Activated CD4-positive, alpha-beta T cell treated with anti-CD3 and anti-CD28 coated beads for 36 hours (primary cell): ENCODE measurements at regions of chr12 and their contacts with region 1.

Region 1: GRCh38 chr12:64696080-64696741 is 63.0 kb downstream of the GNS start:
- DNase-seq: no peak
- ATAC-seq: no peak
- H3K4me3 Mint-ChIP-seq: no peak overlapping the region
- H3K27ac Mint-ChIP-seq: no peak overlapping the region
- H3K4me1 Mint-ChIP-seq: peaks cover 75% of the 10 kb centered on the region
- H3K27me3 Mint-ChIP-seq: no peaks in the 10 kb centered on the region

Region 2: GRCh38 chr12:64431791-64432190 is 264.4 kb before region 1 on chr12:
- CTCF ChIA-PET with region 1: no interaction called
- POLR2A ChIA-PET with region 1: no interaction called
- intact Hi-C with region 1: no loop called
- DNase-seq: no peak
- ATAC-seq: no peak
- H3K4me3 Mint-ChIP-seq: no peak overlapping the region
- H3K27ac Mint-ChIP-seq: no peak overlapping the region
- H3K4me1 Mint-ChIP-seq: no peaks in the 10 kb centered on the region
- H3K27me3 Mint-ChIP-seq: no peaks in the 10 kb centered on the region

Region 3: DNA sequence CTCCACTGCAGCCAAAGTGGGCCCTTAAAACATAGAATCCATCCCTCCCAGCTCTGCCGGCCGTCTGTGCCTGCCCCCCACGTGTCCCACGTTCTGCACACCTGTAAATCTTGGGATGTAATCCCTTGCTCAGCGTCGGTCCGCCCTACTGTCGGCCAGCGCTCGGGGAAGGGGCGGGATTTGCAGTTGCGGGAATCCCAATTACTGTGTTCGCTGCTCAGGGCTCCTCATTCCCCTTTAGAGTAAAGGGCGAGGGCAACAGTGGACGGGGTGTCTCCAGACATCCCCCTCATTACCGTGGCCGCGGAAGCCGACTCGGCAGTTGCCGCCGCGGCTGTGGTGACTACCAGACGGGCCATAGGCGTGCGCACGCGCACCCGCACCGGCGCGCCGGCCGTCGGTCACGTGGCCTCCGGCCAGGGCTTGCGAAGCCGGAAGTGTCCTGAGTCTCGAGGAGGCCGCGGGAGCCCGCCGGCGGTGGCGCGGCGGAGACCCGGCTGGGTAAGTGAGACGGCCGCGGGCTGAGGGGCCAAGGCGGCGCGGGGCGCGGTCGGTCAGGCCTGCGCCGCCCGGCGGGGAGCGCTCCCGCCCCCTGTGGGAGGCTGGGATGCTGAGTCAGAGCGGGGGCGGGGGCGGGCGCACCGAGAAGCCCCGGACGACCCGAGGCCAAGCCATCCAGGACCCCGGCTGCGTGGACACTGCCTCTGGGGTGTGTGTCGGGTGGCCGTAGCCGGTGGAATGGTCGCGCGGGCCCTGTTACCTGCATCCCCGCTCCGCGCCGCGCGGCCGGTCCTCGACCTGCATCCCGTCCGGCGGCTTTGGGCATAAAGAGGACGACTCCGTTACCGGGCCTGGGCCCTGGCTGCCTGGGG is 244.3 kb before region 1 on chr12 and contains the start of gene TBK1:
- CTCF ChIA-PET with region 1: no interaction called
- POLR2A ChIA-PET with region 1: no interaction called
- intact Hi-C with region 1: loop called in 1 of 2 experiments (anchors 5 kb)
- DNase-seq: peak; percentile 75
- ATAC-seq: peak; percentile 64
- H3K4me3 Mint-ChIP-seq: peak within 1 kb of the TSS; percentile 89
- H3K27ac Mint-ChIP-seq: peak within 1 kb of the TSS; percentile 98
- H3K4me1 Mint-ChIP-seq: peaks cover 40% of the 10 kb centered on the region
- H3K27me3 Mint-ChIP-seq: no peaks in the 10 kb centered on the region
- total RNA-seq, gene TBK1: 14.0 to 15.4 TPM

Region 4: DNA sequence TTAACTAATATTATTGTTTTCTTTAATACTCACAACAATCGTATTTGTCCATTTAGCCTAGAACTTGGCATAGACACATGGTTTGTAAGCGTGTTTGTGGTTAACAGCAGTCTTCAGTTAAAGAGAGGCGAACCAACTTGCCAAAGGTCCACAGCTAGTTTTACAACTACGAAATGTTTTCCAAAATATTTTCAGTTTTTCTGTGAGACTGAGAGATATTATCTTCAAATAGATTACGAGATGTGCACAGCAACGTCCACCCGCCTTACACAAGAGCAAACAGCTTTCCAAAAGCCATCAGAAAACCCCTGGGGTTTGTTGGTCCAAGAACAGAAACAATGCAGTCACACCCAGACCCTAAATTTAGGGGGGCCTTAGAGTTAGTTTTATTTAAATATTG is 144.5 kb before region 1 on chr12:
- CTCF ChIA-PET with region 1: interaction called, 128 read pairs
- POLR2A ChIA-PET with region 1: no interaction called
- intact Hi-C with region 1: loop called (anchors 1 kb)
- DNase-seq: no peak
- ATAC-seq: no peak
- H3K4me3 Mint-ChIP-seq: no peak overlapping the region
- H3K27ac Mint-ChIP-seq: no peak overlapping the region
- H3K4me1 Mint-ChIP-seq: peaks cover 6% of the 10 kb centered on the region
- H3K27me3 Mint-ChIP-seq: no peaks in the 10 kb centered on the region

Region 5: DNA sequence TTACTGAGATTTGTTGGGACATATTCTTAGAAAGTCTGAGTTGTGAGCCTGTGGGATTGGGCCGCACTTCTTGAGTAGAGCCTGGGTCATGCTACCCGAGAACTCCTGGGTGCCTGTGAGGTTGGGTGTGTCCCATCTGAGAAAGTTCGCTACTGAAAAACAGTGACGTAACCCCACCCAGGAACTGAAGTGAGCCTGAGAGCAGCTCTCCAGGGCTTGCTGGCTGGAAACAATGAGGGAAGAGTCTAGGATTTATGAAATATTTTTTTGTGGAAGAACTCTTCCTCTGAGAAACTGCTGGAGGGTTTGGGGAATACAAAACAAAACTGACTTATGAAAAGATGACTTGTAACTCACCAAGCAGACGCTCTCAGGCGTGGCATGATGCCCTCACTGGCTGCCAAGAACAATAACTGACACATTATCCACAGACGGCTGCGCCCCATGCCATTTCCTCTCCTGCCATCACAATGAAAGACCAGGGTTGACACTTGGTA is 16.7 kb before region 1 on chr12:
- CTCF ChIA-PET with region 1: interaction called, 19 read pairs
- POLR2A ChIA-PET with region 1: interaction called, 3 read pairs
- intact Hi-C with region 1: loop called in 1 of 2 experiments (anchors 2 kb)
- DNase-seq: peak; percentile 79
- ATAC-seq: peak; percentile 59
- H3K4me3 Mint-ChIP-seq: peak overlapping the region; percentile 53
- H3K27ac Mint-ChIP-seq: peak overlapping the region; percentile 91
- H3K4me1 Mint-ChIP-seq: peaks cover 96% of the 10 kb centered on the region
- H3K27me3 Mint-ChIP-seq: no peaks in the 10 kb centered on the region

Region 6: GRCh38 chr12:64706306-64706705 is 10.1 kb after region 1 on chr12:
- CTCF ChIA-PET with region 1: interaction called, 23 read pairs
- POLR2A ChIA-PET with region 1: no interaction called
- intact Hi-C with region 1: no loop called
- DNase-seq: no peak
- ATAC-seq: no peak
- H3K4me3 Mint-ChIP-seq: no peak overlapping the region
- H3K27ac Mint-ChIP-seq: no peak overlapping the region
- H3K4me1 Mint-ChIP-seq: peaks cover 6% of the 10 kb centered on the region
- H3K27me3 Mint-ChIP-seq: no peaks in the 10 kb centered on the region